Esophagus muscularis mucosa (tissue), 4 donors: ENCODE measurements at regions of chr14 and their contacts with region 1.

Region 1: DNA sequence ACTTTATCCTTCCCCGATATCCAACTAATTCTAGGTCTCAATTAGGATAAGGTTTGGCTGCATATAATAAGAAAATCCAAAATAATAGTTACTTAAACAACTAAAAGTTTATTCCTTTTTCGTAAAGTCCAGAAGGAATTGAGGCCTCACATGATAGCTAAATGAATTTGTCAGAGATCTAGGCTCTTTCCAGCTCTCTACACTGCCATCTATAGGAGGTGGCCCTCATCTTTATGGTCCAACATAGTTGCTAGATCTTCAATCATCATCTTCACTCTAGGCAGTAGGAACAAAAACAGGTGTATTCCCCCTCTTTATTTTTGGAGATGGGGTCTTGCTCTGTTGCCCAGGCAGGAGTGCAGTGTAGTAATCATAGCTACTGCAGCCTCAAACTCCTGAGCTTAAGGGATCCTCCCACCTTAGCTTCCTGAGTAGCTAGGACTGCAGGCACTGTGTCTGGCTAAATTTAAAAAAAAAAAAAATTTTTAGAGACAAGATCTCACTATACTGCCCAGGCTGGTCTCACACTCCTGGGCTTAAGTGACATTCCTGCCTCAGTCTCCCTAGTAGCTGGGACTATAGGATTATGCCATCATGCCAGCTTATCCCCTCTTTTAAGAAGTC is 46.5 kb upstream of the SAV1 start:
- DNase-seq: no peak
- H3K4me3 ChIP-seq: no peak overlapping the region
- H3K27ac ChIP-seq: no peak overlapping the region
- H3K4me1 ChIP-seq: no peaks in the 10 kb centered on the region
- H3K27me3 ChIP-seq: no peaks in the 10 kb centered on the region
- CTCF ChIP-seq: peak; percentile 36 to 53 (median 40)
- EP300 ChIP-seq: no peak
- POLR2A ChIP-seq: no peak

Region 2: DNA sequence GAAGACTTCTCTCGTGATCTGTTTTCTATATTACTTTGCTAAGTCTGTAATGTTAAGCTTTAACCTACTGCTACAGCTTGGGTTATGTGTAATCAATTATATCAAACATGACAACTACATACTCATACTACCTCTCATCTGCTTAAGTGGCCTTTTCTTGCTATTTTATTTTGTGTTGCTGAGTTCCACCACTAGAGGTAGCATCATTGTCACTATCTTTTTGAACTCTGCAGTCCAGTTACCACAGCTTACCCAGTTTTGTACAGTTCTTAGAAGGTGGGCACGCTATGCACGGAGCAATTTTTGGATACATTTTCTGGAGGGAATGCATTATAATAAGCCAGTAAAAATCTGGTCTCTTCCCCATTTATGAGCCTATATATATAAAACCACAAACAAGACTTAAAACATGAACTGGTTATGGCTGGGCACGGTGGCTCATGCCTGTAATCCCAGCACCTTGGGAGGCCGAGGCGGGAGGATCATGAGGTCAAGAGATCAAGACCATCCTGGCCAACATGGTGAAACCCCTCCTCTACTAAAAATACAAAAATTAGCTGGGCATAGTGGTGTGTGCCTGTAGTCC is 94.9 kb before region 1 on chr14:
- intact Hi-C with region 1: loop called (anchors 2 kb)
- DNase-seq: no peak
- H3K4me3 ChIP-seq: no peak overlapping the region
- H3K27ac ChIP-seq: no peak overlapping the region
- H3K4me1 ChIP-seq: no peaks in the 10 kb centered on the region
- H3K27me3 ChIP-seq: no peaks in the 10 kb centered on the region
- CTCF ChIP-seq: peak; percentile 36 to 56 (median 41)
- EP300 ChIP-seq: no peak
- POLR2A ChIP-seq: no peak

Region 3: GRCh38 chr14:50920482-50921230 is 206.1 kb after region 1 on chr14:
- intact Hi-C with region 1: no loop called
- DNase-seq: peak; percentile 68
- H3K4me3 ChIP-seq: no peak overlapping the region
- H3K27ac ChIP-seq: no peak overlapping the region
- H3K4me1 ChIP-seq: peaks cover 0 to 8% (median 0%) of the 10 kb centered on the region in 4 donors
- H3K27me3 ChIP-seq: no peaks in the 10 kb centered on the region
- CTCF ChIP-seq: no peak
- EP300 ChIP-seq: no peak
- POLR2A ChIP-seq: no peak